Activated T-helper 1 cell treated with anti-CD3 and anti-CD28 coated beads, Interleukin-12 subunit alpha, Interleukin-12 subunit beta, Interleukin-2, Interleukin-4 antibody, amounts not matched to agents 30 ng/mL and 10 ng/mL and 1 ng/mL, durations not matched to agents 14 hours and 24 hours and 36 hours (primary cell): ENCODE measurements at regions of chr6 and their contacts with region 1.

Region 1: GRCh38 chr6:26156076-26156849 is 69.0 kb downstream of the HFE start:
- DNase-seq: peak; percentile 89
- H3K4me3 Mint-ChIP-seq: peak overlapping the region; percentile 91
- H3K27ac Mint-ChIP-seq: peak overlapping the region; percentile 95
- H3K4me1 Mint-ChIP-seq: peaks cover 56% of the 10 kb centered on the region
- H3K27me3 Mint-ChIP-seq: peaks cover 3% of the 10 kb centered on the region

Region 2: GRCh38 chr6:26103770-26104456 is 52.4 kb before region 1 on chr6:
- intact Hi-C with region 1: loop called (anchors 1 kb)
- DNase-seq: peak; percentile 90
- H3K4me3 Mint-ChIP-seq: peak overlapping the region; percentile 90
- H3K27ac Mint-ChIP-seq: peak overlapping the region; percentile 99
- H3K4me1 Mint-ChIP-seq: peaks cover 25% of the 10 kb centered on the region
- H3K27me3 Mint-ChIP-seq: peaks cover 2% of the 10 kb centered on the region

Region 3: DNA sequence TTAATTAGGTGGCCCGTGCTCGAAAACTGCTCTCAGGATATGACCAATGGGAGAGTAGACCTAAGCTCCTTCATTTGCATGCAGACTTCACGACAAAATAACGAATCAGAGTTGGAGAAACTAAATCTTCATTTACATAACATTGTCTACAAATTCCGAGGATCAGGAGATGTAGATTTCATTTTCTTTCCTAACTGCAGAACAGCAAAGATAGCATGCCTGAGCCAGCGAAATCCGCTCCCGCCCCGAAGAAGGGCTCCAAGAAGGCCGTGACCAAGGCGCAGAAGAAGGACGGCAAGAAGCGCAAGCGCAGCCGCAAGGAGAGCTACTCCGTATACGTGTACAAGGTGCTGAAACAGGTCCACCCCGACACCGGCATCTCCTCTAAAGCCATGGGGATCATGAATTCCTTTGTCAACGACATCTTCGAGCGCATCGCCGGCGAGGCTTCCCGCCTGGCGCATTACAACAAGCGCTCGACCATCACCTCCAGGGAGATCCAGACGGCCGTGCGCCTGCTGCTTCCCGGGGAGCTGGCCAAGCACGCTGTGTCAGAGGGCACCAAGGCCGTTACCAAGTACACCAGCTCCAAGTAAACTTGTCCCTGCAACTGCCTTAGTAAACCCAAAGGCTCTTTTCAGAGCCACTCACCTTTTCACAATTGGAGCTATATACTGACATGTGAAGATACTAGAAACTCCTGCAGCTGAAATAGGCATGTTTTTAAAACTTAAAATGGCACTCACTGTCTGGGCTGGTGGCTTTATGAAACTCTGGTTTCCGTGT is 27.5 kb after region 1 on chr6:
- intact Hi-C with region 1: loop called (anchors 1 kb)
- DNase-seq: peak; percentile 71
- H3K4me3 Mint-ChIP-seq: peak overlapping the region; percentile 86
- H3K27ac Mint-ChIP-seq: peak overlapping the region; percentile 97
- H3K4me1 Mint-ChIP-seq: peaks cover 58% of the 10 kb centered on the region
- H3K27me3 Mint-ChIP-seq: no peaks in the 10 kb centered on the region

Region 4: GRCh38 chr6:26216356-26216885 is 60.2 kb after region 1 on chr6:
- intact Hi-C with region 1: loop called (anchors 1 kb)
- DNase-seq: peak; percentile 86
- H3K4me3 Mint-ChIP-seq: no peak overlapping the region
- H3K27ac Mint-ChIP-seq: no peak overlapping the region
- H3K4me1 Mint-ChIP-seq: peaks cover 11% of the 10 kb centered on the region
- H3K27me3 Mint-ChIP-seq: no peaks in the 10 kb centered on the region

Region 5: DNA sequence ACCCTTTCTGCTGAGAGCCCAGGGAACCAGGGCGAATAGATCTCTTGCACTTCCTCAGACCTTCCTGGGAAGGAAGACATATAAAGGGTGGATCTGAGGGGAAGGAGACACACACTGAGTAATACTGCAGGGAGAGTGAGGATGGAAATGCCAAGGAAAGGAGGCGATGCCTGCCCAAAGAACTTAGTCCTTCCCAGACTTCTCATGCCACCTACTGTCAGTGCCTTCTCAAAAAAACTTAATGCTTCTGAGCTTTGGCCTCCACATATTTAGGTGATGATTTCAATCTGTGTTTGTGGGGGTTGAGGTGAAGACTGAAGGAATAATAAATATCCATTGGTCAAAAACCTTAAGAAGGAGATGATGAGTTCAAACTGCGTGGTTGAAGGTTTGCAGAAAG is 255.5 kb after region 1 on chr6:
- intact Hi-C with region 1: no loop called
- DNase-seq: no peak
- H3K4me3 Mint-ChIP-seq: no peak overlapping the region
- H3K27ac Mint-ChIP-seq: peak overlapping the region; percentile 47
- H3K4me1 Mint-ChIP-seq: peaks cover 17% of the 10 kb centered on the region
- H3K27me3 Mint-ChIP-seq: no peaks in the 10 kb centered on the region

Region 6: GRCh38 chr6:27864906-27865849 is 1708.9 kb after region 1 on chr6:
- intact Hi-C with region 1: loop called (anchors 1 kb)
- DNase-seq: peak; percentile 80
- H3K4me3 Mint-ChIP-seq: peak overlapping the region; percentile 99
- H3K27ac Mint-ChIP-seq: peak overlapping the region; percentile 99
- H3K4me1 Mint-ChIP-seq: peaks cover 71% of the 10 kb centered on the region
- H3K27me3 Mint-ChIP-seq: peaks cover 4% of the 10 kb centered on the region